H1 (cell line): ENCODE measurements at regions of chr6 and their contacts with region 1.

Region 1: GRCh38 chr6:99282491-99283062 is 66.9 kb downstream of the FAXC start:
- DNase-seq: no peak
- H3K4me3 ChIP-seq: no peak overlapping the region
- H3K27ac ChIP-seq: no peak overlapping the region
- H3K4me1 ChIP-seq: peaks cover 0 to 2% (median 0%) of the 10 kb centered on the region in 4 experiments; a peak in 1 of 7 replicates
- H3K27me3 ChIP-seq: no peaks in the 10 kb centered on the region
- CTCF ChIP-seq: peak in 1 of 3 experiments; percentile 45; a peak in 2 of 4 replicates
- EP300 ChIP-seq: no peak
- POLR2A ChIP-seq: no peak
- RAD21 ChIP-seq: peak; percentile 44 to 51

Region 2: GRCh38 chr6:99138445-99138844 is 144.1 kb before region 1 on chr6:
- CTCF ChIA-PET with region 1: no interaction called
- POLR2A ChIA-PET with region 1: no interaction called
- DNase-seq: no peak
- H3K4me3 ChIP-seq: no peak overlapping the region
- H3K27ac ChIP-seq: no peak overlapping the region
- H3K4me1 ChIP-seq: no peaks in the 10 kb centered on the region
- H3K27me3 ChIP-seq: no peaks in the 10 kb centered on the region
- CTCF ChIP-seq: no peak
- EP300 ChIP-seq: no peak
- POLR2A ChIP-seq: no peak
- RAD21 ChIP-seq: no peak

Region 3: DNA sequence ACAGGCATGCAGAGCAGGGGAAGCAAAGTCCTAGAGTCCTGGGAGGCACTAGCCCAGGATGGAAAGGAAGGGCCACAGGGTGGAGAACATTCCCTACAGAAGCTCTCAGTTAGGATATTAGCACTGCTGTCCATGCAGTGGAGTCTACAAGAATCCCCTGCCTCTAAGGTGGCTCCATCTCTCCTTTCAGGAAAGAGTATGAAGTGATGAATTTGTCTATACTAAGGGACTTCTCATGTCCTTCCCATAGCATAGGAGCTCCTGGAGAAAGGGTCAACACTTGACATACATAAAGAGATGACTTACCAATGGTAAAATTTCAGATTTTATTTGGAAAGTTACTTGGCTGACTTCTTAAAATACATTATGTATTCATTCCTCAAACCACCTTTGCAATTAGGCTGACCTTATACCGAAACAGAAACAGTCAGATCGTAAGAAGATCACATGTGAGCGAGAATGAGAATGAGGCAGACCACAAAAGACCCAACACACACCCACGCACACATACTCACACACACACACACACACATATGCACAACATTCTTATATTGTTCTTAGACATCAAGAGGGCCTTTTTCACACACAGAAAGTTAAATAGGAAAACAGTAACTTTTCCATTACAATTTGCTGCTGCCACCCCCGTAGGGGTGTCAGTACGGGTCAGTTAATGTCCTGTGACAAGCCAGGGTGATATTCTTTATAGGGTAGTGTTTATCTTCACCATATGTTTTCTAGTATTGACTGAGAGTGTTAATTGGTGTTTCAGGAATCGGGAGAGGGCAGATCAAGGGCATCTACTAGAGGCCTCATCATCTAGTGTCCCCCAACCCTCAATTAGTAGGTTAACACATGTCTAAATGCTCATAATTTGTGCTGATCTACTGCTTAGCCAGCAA is 92.5 kb before region 1 on chr6:
- CTCF ChIA-PET with region 1: no interaction called
- POLR2A ChIA-PET with region 1: no interaction called
- DNase-seq: no peak
- H3K4me3 ChIP-seq: no peak overlapping the region
- H3K27ac ChIP-seq: no peak overlapping the region
- H3K4me1 ChIP-seq: no peaks in the 10 kb centered on the region
- H3K27me3 ChIP-seq: no peaks in the 10 kb centered on the region
- CTCF ChIP-seq: no peak
- EP300 ChIP-seq: no peak
- POLR2A ChIP-seq: no peak
- RAD21 ChIP-seq: no peak

Region 4: GRCh38 chr6:99324996-99325395 is 42.4 kb after region 1 on chr6:
- CTCF ChIA-PET with region 1: interaction called, 11 read pairs
- POLR2A ChIA-PET with region 1: no interaction called
- DNase-seq: no peak
- H3K4me3 ChIP-seq: no peak overlapping the region
- H3K27ac ChIP-seq: no peak overlapping the region
- H3K4me1 ChIP-seq: no peaks in the 10 kb centered on the region
- H3K27me3 ChIP-seq: no peaks in the 10 kb centered on the region
- CTCF ChIP-seq: no peak
- EP300 ChIP-seq: no peak
- POLR2A ChIP-seq: no peak
- RAD21 ChIP-seq: no peak